MCF 10A (cell line): ENCODE measurements at regions of chr19 and their contacts with region 1.

Region 1: DNA sequence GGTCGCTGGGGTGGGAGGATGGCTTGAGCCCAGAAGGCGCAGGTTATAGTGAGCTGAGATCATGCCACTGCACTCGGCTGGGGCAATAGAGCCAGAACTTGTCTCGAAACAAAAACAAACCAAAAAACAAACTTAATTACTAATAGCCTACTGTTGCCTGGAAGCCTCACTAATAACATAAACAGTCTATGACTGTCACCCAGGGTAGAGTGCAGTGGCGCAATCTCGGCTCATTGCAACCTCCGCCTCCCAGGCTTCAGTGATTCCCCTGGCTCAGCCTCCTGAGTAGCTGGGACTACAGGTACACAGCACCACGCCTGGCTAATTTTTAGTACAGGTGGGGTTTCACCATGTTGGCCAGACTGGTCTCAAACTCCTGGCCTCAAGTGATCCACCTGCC is 18.0 kb downstream of the CATSPERD start:
- DNase-seq: peak; percentile 53
- H3K4me3 Mint-ChIP-seq: no peak overlapping the region
- H3K27ac Mint-ChIP-seq: no peak overlapping the region
- H3K4me1 Mint-ChIP-seq: no peaks in the 10 kb centered on the region
- H3K27me3 Mint-ChIP-seq: peaks cover 9% of the 10 kb centered on the region
- CTCF ChIP-seq: no peak

Region 2: DNA sequence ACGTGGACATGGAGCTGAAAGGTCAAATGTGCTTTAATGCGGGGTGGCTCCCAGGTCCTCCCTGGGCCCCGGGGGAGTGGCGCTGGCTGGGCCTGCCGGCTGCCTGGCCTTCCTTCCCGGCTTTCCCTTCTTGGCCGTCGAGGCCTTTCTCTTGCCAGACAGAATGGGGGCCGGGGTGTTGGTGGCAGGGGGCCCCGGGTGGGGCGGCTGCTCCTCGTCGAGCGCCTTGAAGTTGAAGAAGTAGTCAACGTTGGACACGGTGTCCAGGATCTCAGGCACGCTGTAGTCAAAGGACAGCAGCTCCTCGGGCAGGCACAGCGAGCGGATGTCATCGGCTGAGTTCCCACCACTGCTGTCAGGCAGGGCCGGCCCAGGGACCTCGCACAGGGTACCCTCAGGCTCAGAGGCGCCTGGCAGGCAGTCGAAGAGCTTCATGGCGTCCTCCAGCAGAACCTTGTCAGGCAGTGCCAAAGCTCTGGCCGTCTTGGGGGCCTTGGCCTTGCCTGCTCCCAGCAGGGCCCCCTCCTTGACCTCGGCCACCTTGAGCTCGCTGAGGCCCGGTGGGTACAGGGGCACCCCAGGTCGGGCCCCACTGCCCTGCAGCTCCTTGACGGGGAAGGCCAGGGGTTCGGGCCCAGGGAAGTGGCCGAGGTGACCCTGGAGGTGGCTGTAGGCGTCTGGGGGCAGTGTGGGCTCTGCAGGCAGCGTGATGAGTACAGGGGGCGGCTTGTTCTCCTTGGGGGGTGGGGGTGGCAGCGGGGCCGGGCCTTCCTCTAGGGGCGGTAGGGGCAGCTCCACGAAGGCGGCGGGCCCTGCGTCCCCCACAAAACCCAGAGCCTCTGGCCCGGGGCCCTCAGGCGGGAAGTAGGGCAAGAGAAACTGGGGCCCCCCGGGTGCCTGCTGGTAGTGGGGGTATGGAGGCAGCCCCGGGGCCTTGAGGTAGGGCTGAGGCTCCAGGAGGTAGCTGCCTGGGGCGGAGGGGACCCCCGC is 44.8 kb after region 1 on chr19:
- CTCF ChIA-PET with region 1: no interaction called
- POLR2A ChIA-PET with region 1: interaction called, 12 read pairs
- intact Hi-C with region 1: no loop called
- DNase-seq: no peak
- H3K4me3 Mint-ChIP-seq: no peak overlapping the region
- H3K27ac Mint-ChIP-seq: no peak overlapping the region
- H3K4me1 Mint-ChIP-seq: no peaks in the 10 kb centered on the region
- H3K27me3 Mint-ChIP-seq: no peaks in the 10 kb centered on the region
- CTCF ChIP-seq: no peak

Region 3: GRCh38 chr19:5795382-5795919 is 57.0 kb after region 1 on chr19:
- CTCF ChIA-PET with region 1: no interaction called
- POLR2A ChIA-PET with region 1: no interaction called
- intact Hi-C with region 1: no loop called
- DNase-seq: no peak
- H3K4me3 Mint-ChIP-seq: no peak overlapping the region
- H3K27ac Mint-ChIP-seq: no peak overlapping the region
- H3K4me1 Mint-ChIP-seq: peaks cover 4% of the 10 kb centered on the region
- H3K27me3 Mint-ChIP-seq: no peaks in the 10 kb centered on the region
- CTCF ChIP-seq: no peak